B cell (primary cell): ENCODE measurements at regions of chr6 and their contacts with region 1.

Region 1: DNA sequence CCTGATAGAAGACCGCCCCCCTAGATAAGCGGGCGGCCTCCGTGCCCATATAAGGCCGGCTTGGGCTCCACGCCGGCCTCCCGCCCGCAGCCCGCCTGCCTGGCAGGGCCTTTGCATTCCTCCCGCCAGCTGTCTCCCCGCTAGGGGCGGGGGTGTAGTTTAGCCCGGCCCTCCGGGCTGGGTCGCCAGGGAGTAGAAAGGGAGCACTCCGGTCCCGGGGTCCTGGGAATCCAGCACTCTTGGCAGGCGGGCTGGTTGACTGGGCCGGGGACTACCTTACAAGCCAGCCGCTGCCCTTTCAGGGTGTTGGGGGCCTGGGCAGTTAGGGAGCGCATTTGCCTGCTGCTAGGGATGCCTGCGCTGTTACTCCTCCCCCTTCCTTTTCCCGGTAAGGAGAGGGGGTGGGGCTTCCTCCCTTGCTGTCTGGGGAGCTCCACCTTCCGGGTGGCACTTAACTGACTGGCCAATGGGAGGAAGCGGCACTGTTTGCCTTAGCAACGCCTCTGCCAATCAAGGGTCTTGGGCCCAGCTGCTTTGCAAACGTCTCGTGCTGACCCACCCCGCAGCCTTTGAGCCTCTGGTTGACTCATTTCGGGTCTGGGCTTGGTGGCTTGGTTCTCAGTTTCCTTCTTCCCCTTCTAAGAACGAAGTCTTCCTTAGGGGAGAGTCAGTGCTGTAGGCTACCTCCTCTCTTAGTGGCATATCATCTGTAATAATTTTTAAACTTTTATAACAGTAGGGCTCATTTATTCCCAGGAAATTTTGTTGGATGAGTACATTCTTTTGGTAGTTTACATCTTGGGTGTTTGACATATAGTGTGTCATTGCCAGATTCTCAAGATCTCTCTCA is 3.4 kb downstream of the SRF start:
- DNase-seq: peak; percentile 96
- ATAC-seq: peak; percentile 66
- H3K4me3 ChIP-seq: peak overlapping the region in 4 of 5 experiments; percentile 35 to 47 (median 38)
- H3K4me3 Mint-ChIP-seq: peak overlapping the region; percentile 85
- H3K27ac ChIP-seq: peak overlapping the region; percentile 78 to 90
- H3K27ac Mint-ChIP-seq: peak overlapping the region; percentile 95
- H3K4me1 ChIP-seq: peaks cover 35 to 49% of the 10 kb centered on the region in 2 donors
- H3K4me1 Mint-ChIP-seq: peaks cover 46% of the 10 kb centered on the region
- H3K27me3 ChIP-seq: peaks cover 0 to 2% (median 0%) of the 10 kb centered on the region in 4 experiments
- H3K27me3 Mint-ChIP-seq: no peaks in the 10 kb centered on the region
- CTCF ChIP-seq: no peak

Region 2: GRCh38 chr6:42771741-42772100 is 402.8 kb before region 1 on chr6:
- CTCF ChIA-PET with region 1: no interaction called
- POLR2A ChIA-PET with region 1: no interaction called
- intact Hi-C with region 1: loop called (anchors 1 kb)
- DNase-seq: peak; percentile 68
- ATAC-seq: no peak
- H3K4me3 ChIP-seq: peak overlapping the region; percentile 30 to 77 (median 49)
- H3K4me3 Mint-ChIP-seq: peak overlapping the region; percentile 87
- H3K27ac ChIP-seq: peak overlapping the region; percentile 90 to 92
- H3K27ac Mint-ChIP-seq: peak overlapping the region; percentile 99
- H3K4me1 ChIP-seq: peaks cover 39 to 52% of the 10 kb centered on the region in 2 donors
- H3K4me1 Mint-ChIP-seq: peaks cover 52% of the 10 kb centered on the region
- H3K27me3 ChIP-seq: no peaks in the 10 kb centered on the region
- H3K27me3 Mint-ChIP-seq: no peaks in the 10 kb centered on the region
- CTCF ChIP-seq: no peak

Region 3: DNA sequence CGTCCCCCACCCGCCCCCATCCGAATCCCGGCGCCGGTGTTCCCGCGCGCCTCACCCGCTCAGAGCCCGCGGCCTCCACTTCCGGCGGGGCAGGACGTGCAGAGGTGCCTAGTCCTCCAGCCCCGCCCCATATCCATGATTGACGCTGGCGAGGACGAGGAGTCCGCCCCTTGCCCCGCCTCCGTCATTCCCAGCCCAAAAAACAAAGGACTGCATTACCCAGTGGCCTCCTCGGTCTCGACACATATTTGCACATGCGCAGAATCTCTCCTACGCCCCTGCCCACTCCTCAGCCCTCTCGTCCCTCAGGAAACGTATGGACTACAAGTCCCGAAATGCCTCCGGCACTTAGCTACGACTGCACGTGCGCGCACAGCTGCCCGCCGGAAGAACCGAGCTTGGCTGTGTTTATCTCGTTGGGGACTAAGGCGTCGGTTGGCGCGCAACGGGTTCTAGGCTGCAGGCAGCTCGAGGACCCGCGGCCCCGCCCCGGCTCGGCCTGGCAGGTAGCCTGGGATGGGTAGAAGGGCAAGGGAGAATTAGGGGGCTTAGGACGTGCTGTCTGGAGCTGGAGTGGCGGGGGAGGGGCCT is 160.6 kb before region 1 on chr6 and contains the starts of genes KLHDC3 and MEA1:
- CTCF ChIA-PET with region 1: interaction called, 3 read pairs
- POLR2A ChIA-PET with region 1: interaction called, 6 read pairs
- intact Hi-C with region 1: loop called (anchors 1 kb)
- DNase-seq: peak; percentile 99
- ATAC-seq: peak; percentile 97
- H3K4me3 ChIP-seq: peak within 1 kb of the TSS; percentile 61 to 79 (median 70)
- H3K4me3 Mint-ChIP-seq: peak within 1 kb of the TSS; percentile 91
- H3K27ac ChIP-seq: peak within 1 kb of the TSS; percentile 35 to 69
- H3K27ac Mint-ChIP-seq: peak within 1 kb of the TSS; percentile 96
- H3K4me1 ChIP-seq: peaks cover 20 to 23% of the 10 kb centered on the region in 2 donors
- H3K4me1 Mint-ChIP-seq: peaks cover 50% of the 10 kb centered on the region
- H3K27me3 ChIP-seq: no peaks in the 10 kb centered on the region
- H3K27me3 Mint-ChIP-seq: no peaks in the 10 kb centered on the region
- CTCF ChIP-seq: no peak
- total RNA-seq, gene KLHDC3: 50.7 and 52.2 TPM in 2 replicates
- total RNA-seq, gene MEA1: 32.5 and 35.7 TPM in 2 replicates

Region 4: DNA sequence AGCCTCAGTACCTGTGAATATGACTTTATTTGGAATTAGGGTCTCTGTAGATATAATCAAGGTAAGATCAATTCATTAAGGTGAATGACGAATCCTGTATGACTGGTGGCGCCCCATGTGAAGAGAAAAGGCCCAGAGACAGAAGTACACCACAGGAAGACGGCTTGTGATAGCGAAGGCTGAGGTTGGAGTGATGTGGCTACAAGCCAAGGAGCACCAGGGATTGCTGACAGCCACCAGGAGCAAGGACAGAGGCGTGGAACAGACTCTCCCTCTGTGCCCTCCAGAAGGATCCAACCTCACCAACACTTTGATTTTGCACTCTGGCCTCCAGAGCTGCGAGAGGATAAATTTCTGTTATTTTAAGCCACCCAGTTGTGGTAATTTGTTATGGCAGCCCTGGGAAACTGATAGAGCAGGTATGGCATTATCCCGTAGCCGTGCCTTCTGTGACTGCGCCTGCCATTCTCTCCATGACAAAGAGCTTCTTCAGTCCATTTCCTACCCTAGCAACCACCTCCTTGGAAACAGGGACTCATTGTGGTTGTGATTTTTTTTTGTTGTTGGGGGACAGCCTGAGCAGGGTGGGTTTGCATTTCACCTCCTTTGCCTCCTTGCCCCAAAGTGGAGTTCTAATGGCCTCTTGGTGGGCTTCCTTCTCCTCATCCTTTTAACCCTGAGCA is 68.8 kb before region 1 on chr6:
- CTCF ChIA-PET with region 1: no interaction called
- POLR2A ChIA-PET with region 1: no interaction called
- intact Hi-C with region 1: no loop called
- DNase-seq: no peak
- ATAC-seq: no peak
- H3K4me3 ChIP-seq: no peak overlapping the region
- H3K4me3 Mint-ChIP-seq: no peak overlapping the region
- H3K27ac ChIP-seq: no peak overlapping the region
- H3K27ac Mint-ChIP-seq: no peak overlapping the region
- H3K4me1 ChIP-seq: no peaks in the 10 kb centered on the region
- H3K4me1 Mint-ChIP-seq: no peaks in the 10 kb centered on the region
- H3K27me3 ChIP-seq: no peaks in the 10 kb centered on the region
- H3K27me3 Mint-ChIP-seq: no peaks in the 10 kb centered on the region
- CTCF ChIP-seq: no peak

Region 5: DNA sequence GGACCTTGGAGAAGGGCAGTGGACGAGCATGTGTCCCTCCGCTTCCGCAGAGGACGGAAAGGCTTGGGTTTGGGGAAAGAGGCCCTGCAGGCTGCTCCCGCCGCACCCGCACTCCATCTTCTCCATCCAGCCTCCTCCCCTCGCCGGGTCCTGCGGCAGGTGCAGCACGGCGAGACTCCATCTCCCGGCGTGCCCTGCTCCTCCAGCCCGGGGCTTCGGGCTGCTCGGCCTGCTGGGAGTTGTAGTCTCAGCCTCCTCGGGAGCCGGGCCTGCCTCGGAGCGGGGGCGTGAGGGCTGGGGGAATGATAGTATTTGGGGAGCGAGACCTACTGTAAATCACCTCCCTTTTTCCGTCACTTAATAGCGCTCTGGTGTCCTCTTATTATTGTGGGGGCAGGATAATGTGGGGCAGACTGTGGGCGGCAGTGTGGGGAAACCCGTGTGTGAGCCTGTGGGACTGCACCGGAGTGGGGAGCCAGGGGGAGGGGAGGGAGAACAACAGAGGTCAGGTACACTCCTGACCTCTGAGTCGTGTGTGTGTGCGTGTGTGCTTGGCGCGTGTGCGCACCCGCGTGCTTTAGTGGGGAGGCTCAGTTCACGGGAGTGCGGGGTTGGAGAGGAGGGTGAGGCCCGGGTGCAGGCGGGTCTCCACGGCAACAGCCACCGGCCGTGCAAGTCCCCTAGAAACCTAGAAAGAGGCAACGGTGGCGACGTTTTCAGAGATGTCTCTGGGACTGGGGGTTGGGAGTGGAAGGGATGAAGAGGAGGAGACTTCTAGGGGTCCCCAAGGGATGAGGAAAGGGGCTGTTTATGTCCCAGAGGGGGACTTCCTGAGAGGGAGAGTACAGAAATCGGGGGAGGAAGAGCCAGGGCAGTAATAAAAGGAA is 72.9 kb after region 1 on chr6:
- CTCF ChIA-PET with region 1: no interaction called
- POLR2A ChIA-PET with region 1: no interaction called
- intact Hi-C with region 1: loop called (anchors 1 kb)
- DNase-seq: peak; percentile 87
- ATAC-seq: peak; percentile 96
- H3K4me3 ChIP-seq: peak overlapping the region; percentile 51 to 85 (median 72)
- H3K4me3 Mint-ChIP-seq: no peak overlapping the region
- H3K27ac ChIP-seq: peak overlapping the region; percentile 51 to 65
- H3K27ac Mint-ChIP-seq: peak overlapping the region; percentile 87
- H3K4me1 ChIP-seq: peaks cover 19 to 21% of the 10 kb centered on the region in 2 donors
- H3K4me1 Mint-ChIP-seq: peaks cover 22% of the 10 kb centered on the region
- H3K27me3 ChIP-seq: peaks cover 0 to 62% (median 38%) of the 10 kb centered on the region in 4 experiments
- H3K27me3 Mint-ChIP-seq: peaks cover 29% of the 10 kb centered on the region
- CTCF ChIP-seq: no peak

Region 6: DNA sequence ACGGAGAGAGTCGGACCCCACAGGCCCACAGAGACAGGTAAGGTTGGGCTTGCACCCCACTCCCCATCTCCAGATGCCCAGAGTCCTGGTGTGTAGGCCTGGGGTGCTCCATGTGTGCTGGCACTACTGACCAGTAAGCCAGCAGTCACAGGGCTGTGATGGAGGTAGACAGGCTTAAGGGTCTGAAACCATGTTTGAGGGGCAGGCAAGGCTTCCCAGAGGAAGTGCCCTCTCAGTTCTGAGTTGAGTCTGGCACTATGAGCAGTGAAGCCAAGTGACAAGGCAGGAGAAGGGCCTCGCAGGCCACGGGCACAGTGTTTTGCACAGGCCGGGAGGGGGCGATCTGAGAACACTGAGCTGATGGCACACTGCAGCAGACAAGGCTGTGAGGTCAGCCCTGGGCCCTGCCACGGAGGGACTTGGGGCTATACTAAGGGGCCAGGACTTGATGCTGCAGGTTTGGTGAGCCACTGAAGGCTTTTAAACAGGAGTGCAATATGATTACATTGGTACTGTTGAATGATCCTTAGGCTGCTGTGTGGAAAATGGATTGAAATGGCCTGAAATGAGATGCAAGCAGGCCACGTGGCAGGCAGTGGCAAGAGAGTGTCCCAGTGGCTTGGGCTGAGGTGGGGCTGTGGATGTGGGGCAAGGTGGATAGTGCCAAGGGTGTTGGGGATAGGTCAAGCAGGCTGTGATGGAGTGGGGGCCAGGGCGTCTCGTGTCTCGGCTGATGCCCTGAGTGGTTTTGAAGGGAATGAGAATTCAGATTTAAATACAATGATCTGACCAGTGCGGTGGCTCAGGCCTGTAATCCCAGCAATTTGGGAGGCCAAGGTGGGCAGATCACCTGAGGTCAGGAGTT is 89.1 kb after region 1 on chr6:
- CTCF ChIA-PET with region 1: no interaction called
- POLR2A ChIA-PET with region 1: no interaction called
- intact Hi-C with region 1: no loop called
- DNase-seq: peak; percentile 84
- ATAC-seq: peak; percentile 98
- H3K4me3 ChIP-seq: no peak overlapping the region
- H3K4me3 Mint-ChIP-seq: no peak overlapping the region
- H3K27ac ChIP-seq: no peak overlapping the region
- H3K27ac Mint-ChIP-seq: no peak overlapping the region
- H3K4me1 ChIP-seq: no peaks in the 10 kb centered on the region
- H3K4me1 Mint-ChIP-seq: peaks cover 8% of the 10 kb centered on the region
- H3K27me3 ChIP-seq: peaks cover 0 to under 1% (median 0%) of the 10 kb centered on the region in 4 experiments
- H3K27me3 Mint-ChIP-seq: peaks cover 4% of the 10 kb centered on the region
- CTCF ChIP-seq: peak; percentile 84

Region 7: GRCh38 chr6:43477235-43478007 is 302.9 kb after region 1 on chr6 and contains the start of gene TJAP1:
- CTCF ChIA-PET with region 1: interaction called, 5 read pairs
- POLR2A ChIA-PET with region 1: no interaction called
- intact Hi-C with region 1: loop called (anchors 1 kb)
- DNase-seq: peak; percentile 94
- ATAC-seq: peak; percentile 100
- H3K4me3 ChIP-seq: peak within 1 kb of the TSS; percentile 51 to 81 (median 71)
- H3K4me3 Mint-ChIP-seq: peak within 1 kb of the TSS; percentile 96
- H3K27ac ChIP-seq: peak within 1 kb of the TSS; percentile 79 to 97
- H3K27ac Mint-ChIP-seq: peak within 1 kb of the TSS; percentile 98
- H3K4me1 ChIP-seq: peaks cover 14 to 22% of the 10 kb centered on the region in 2 donors
- H3K4me1 Mint-ChIP-seq: peaks cover 41% of the 10 kb centered on the region
- H3K27me3 ChIP-seq: no peaks in the 10 kb centered on the region
- H3K27me3 Mint-ChIP-seq: no peaks in the 10 kb centered on the region
- CTCF ChIP-seq: no peak
- total RNA-seq, gene TJAP1: 57.1 and 59.1 TPM in 2 replicates

Region 8: DNA sequence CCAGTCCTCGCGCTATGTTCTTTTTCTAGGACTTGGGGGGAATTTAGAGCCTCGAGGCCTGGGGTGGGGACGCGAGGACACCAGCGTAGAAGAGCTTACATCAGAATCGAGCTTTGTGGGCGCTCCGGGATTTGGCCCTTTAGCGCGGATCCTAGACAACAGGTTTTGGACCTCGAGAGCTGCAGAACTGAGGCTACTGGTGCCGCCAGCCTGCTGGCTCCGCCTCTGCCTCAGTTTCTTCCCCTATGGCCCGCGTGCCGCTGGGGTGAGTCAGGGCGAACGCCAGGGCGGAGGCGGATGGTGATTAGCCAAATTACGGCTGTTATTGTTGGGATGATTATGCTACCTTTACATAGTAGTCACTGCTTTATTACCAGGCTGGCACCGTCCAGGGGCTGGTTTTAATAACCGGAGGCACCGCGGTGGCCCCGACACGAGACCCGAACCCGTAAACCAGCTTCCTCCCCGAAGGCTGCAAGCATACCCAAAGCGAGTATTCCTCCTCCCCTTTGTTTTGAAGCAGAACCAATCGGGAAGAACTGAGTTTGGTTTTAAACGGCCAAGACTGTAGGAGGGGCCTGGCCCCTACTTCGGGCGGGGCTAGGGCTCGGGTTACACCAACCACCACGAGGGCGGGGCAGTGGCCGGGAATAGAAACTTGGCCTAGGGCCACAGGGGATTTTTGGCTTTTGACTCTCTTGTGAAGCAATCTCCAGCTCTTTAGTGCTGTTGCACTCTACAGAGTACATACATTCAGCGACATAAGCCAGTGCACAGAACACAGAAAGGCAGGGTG is 455.2 kb after region 1 on chr6:
- CTCF ChIA-PET with region 1: no interaction called
- POLR2A ChIA-PET with region 1: no interaction called
- intact Hi-C with region 1: loop called (anchors 2 kb)
- DNase-seq: peak; percentile 95
- ATAC-seq: peak; percentile 66
- H3K4me3 ChIP-seq: peak overlapping the region; percentile 64 to 96 (median 90)
- H3K4me3 Mint-ChIP-seq: peak overlapping the region; percentile 100
- H3K27ac ChIP-seq: peak overlapping the region; percentile 70 to 84
- H3K27ac Mint-ChIP-seq: peak overlapping the region; percentile 99
- H3K4me1 ChIP-seq: peaks cover 22 to 33% of the 10 kb centered on the region in 2 donors
- H3K4me1 Mint-ChIP-seq: peaks cover 32% of the 10 kb centered on the region
- H3K27me3 ChIP-seq: no peaks in the 10 kb centered on the region
- H3K27me3 Mint-ChIP-seq: no peaks in the 10 kb centered on the region
- CTCF ChIP-seq: no peak